ENCODE measurements at regions of chr7 and their contacts with region 1.

Region 1: DNA sequence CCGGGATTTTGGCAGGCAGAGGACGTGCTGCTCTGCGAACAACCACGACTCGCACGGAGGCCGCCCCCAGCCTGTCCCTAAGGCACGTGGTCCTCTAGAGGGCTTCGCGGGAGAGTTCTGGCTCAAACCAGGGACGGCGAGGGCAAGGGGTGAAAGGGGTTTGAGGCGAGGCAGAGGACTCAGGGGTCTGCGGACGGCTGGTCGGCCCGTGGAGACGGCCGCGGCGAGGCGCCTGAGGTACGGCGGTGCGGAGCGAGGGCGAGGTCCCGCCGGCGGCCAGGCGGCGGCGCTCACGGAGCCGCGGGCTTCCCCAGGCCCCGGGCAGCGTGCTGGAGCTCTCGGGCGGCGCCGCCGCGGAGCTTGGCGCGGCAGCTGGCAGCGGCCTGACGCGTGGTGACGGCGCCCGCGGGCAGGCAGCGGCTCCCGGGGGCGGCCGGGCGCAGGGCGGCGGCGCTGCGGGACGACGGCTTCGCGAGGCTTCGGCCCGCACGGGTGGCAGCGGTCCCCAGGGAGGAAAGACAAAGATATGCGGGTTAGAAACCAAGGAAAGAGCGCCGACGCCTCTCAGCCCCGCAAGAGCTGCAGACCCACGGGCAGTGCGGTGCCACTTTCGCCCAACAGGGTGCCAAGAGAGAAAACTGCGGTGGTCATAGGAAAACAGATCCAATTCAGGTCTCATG is 44.8 kb downstream of the ZNF800 start:
- DNase-seq: peak; percentile 73
- ATAC-seq: peak; percentile 98
- H3K4me3 Mint-ChIP-seq: peak overlapping the region; percentile 68
- H3K27ac Mint-ChIP-seq: no peak overlapping the region
- H3K4me1 Mint-ChIP-seq: peaks cover 16% of the 10 kb centered on the region
- H3K27me3 Mint-ChIP-seq: no peaks in the 10 kb centered on the region
- CTCF ChIP-seq: no peak

Region 2: GRCh38 chr7:126803060-126803665 is 544.5 kb before region 1 on chr7:
- CTCF ChIA-PET with region 1: no interaction called
- POLR2A ChIA-PET with region 1: no interaction called
- intact Hi-C with region 1: loop called (anchors 10 kb)
- DNase-seq: no peak
- ATAC-seq: no peak
- H3K4me3 Mint-ChIP-seq: no peak overlapping the region
- H3K27ac Mint-ChIP-seq: no peak overlapping the region
- H3K4me1 Mint-ChIP-seq: no peaks in the 10 kb centered on the region
- H3K27me3 Mint-ChIP-seq: no peaks in the 10 kb centered on the region
- CTCF ChIP-seq: no peak

Region 3: DNA sequence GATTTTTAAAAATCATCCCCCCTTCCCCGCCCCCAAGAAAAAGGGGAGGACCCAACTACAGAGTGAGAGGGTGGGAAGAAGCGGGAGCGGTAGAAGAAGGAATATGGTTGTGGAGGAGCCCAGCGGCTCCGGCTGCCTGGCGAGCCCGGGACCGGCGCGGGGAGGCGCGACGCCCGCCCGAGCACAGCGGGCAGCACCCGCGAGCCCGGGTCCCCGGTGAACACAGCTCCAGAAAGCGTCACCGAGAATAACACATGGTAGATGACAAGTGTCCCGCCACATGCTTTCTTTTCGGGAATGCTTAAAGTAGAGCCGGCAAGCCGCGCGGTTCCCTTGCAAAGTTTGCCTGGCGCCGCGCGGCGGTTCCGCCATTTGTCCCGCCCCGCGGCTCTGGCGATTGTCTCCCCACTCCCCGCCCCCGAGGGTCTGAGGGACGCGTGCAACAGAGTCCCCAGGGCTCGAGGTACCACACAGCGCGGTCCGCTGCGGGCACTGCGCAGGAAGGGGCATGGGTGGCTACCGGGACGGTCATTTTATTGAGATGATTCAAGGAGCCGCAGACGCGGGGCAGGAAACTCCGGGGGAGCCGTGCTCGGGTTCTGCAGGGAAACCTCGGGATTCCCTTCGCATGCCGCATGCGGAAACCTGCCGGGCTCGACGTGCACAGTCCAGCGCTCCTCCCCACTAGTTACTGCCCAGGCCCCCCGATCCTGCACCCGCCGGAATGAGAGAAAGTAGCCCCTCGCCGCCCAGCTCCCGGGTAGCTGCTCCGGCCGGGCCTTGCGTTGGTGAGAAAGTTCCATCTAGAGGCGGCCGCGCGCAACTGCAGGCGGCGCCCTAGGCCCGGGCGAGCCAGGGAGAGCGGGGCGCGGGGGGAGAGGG is 94.2 kb before region 1 on chr7:
- CTCF ChIA-PET with region 1: no interaction called
- POLR2A ChIA-PET with region 1: no interaction called
- intact Hi-C with region 1: loop called (anchors 5 kb)
- DNase-seq: peak; percentile 58
- ATAC-seq: peak; percentile 88
- H3K4me3 Mint-ChIP-seq: peak overlapping the region; percentile 88
- H3K27ac Mint-ChIP-seq: no peak overlapping the region
- H3K4me1 Mint-ChIP-seq: peaks cover 25% of the 10 kb centered on the region
- H3K27me3 Mint-ChIP-seq: peaks cover 67% of the 10 kb centered on the region
- CTCF ChIP-seq: peak; percentile 54

Region 4: GRCh38 chr7:127413962-127414361 is 66.3 kb after region 1 on chr7:
- CTCF ChIA-PET with region 1: interaction called, 3 read pairs
- POLR2A ChIA-PET with region 1: no interaction called
- intact Hi-C with region 1: loop called (anchors 1 kb)
- DNase-seq: no peak
- ATAC-seq: peak; percentile 67
- H3K4me3 Mint-ChIP-seq: peak overlapping the region; percentile 16
- H3K27ac Mint-ChIP-seq: peak overlapping the region; percentile 76
- H3K4me1 Mint-ChIP-seq: peaks cover 75% of the 10 kb centered on the region
- H3K27me3 Mint-ChIP-seq: no peaks in the 10 kb centered on the region
- CTCF ChIP-seq: no peak

Region 5: DNA sequence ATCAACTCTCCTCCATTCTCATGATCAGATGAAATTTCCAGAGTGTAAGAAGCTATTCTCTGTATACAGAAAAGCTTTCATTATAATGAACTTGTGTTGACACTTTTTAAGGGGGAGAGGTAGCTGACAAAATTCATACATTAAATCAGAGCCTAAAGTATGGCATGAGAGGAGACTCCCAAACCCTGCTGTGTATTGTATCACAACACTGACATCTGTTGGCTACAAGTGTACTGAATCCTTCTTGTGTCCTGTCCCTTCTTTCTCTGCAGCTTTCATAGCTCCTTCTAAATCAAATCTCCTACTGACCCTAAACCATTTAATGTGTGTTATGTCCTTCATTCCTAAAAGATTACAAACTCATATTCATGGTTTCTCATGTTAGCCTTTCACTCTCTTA is 166.8 kb after region 1 on chr7:
- CTCF ChIA-PET with region 1: interaction called, 4 read pairs
- POLR2A ChIA-PET with region 1: no interaction called
- intact Hi-C with region 1: loop called (anchors 1 kb)
- DNase-seq: no peak
- ATAC-seq: no peak
- H3K4me3 Mint-ChIP-seq: no peak overlapping the region
- H3K27ac Mint-ChIP-seq: no peak overlapping the region
- H3K4me1 Mint-ChIP-seq: no peaks in the 10 kb centered on the region
- H3K27me3 Mint-ChIP-seq: peaks cover 21% of the 10 kb centered on the region
- CTCF ChIP-seq: no peak

Region 6: GRCh38 chr7:127585044-127585953 is 237.6 kb after region 1 on chr7 and contains the start of gene GCC1:
- CTCF ChIA-PET with region 1: no interaction called
- POLR2A ChIA-PET with region 1: no interaction called
- intact Hi-C with region 1: loop called (anchors 10 kb)
- DNase-seq: peak; percentile 98
- ATAC-seq: peak; percentile 78
- H3K4me3 Mint-ChIP-seq: peak within 1 kb of the TSS; percentile 89
- H3K27ac Mint-ChIP-seq: peak within 1 kb of the TSS; percentile 79
- H3K4me1 Mint-ChIP-seq: peaks cover 76% of the 10 kb centered on the region
- H3K27me3 Mint-ChIP-seq: no peaks in the 10 kb centered on the region
- CTCF ChIP-seq: no peak
- total RNA-seq, gene GCC1: 22.5 and 23.3 TPM in 2 replicates

Measured in activated B cell treated with CpG ODN at 0.5 μM for 24 hours (primary cell).